ENCODE measurements at regions of chr18 and their contacts with region 1.

Region 1: DNA sequence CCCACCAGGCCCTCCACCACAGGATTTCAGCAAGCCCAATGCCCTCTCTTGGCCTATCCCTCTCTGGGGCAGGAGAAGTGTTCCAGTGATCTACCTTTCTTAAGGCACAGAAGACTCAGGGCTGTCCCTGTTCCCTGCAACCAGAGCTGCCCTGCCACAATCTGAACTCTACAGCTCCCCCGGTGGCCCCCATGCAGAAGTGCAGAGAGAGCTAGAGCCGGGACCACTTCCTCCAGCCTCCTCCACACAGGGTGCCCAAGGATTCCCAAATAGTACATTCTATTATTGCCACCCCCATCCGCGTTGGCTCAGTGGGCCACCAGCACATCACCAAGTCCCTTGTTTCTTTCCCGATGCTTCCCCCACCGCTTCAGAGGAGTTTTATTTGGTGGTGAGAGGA is 114.8 kb upstream of the PTPRM start:
- DNase-seq: no peak
- ATAC-seq: peak; percentile 75

Region 2: DNA sequence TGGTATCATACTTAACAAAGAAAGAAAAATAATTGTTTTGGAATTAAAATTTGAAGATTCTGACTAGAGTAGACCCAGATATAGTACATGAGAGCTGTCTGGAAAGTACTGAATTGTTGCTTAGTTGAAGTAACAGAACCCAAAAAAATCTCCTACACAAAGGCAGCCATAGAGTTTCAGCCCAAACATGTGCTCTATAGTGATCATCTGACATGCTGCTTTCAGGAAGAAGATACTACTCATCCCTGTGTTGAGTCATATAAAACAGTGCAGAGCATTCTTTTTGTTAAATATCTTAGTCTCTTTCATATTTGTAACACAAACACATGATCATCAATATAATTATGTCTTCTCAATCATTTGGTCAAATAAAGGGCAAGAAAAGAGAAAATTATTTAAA is 30.0 kb after region 1 on chr18:
- intact Hi-C with region 1: no loop called
- DNase-seq: no peak
- ATAC-seq: no peak

Region 3: GRCh38 chr18:7658712-7659111 is 206.4 kb after region 1 on chr18:
- intact Hi-C with region 1: no loop called
- DNase-seq: no peak
- ATAC-seq: no peak

Region 4: DNA sequence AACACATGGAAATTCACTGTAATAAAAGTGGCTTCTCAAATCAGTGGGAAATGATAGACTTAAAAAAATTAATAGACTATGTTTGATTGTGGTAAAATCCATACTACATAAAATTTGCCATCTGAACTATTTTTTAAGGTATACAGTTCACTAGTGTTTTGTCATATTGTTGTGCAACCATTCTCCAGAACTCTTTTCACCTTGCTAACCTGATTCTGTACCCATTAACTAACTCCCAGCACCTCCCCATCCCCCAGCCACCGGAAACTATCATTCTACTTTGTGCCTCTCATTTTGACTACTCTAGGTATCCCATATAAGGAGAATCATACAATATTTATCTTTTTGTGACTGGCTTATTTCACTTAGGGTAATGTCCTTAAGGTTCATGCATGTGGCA is 268.1 kb after region 1 on chr18:
- intact Hi-C with region 1: no loop called
- DNase-seq: no peak
- ATAC-seq: no peak

Region 5: GRCh38 chr18:7755753-7756475 is 303.6 kb after region 1 on chr18:
- intact Hi-C with region 1: loop called (anchors 10 kb)
- DNase-seq: no peak
- ATAC-seq: peak; percentile 37